ENCODE measurements at regions of chr12 and their contacts with region 1.

Region 1: DNA sequence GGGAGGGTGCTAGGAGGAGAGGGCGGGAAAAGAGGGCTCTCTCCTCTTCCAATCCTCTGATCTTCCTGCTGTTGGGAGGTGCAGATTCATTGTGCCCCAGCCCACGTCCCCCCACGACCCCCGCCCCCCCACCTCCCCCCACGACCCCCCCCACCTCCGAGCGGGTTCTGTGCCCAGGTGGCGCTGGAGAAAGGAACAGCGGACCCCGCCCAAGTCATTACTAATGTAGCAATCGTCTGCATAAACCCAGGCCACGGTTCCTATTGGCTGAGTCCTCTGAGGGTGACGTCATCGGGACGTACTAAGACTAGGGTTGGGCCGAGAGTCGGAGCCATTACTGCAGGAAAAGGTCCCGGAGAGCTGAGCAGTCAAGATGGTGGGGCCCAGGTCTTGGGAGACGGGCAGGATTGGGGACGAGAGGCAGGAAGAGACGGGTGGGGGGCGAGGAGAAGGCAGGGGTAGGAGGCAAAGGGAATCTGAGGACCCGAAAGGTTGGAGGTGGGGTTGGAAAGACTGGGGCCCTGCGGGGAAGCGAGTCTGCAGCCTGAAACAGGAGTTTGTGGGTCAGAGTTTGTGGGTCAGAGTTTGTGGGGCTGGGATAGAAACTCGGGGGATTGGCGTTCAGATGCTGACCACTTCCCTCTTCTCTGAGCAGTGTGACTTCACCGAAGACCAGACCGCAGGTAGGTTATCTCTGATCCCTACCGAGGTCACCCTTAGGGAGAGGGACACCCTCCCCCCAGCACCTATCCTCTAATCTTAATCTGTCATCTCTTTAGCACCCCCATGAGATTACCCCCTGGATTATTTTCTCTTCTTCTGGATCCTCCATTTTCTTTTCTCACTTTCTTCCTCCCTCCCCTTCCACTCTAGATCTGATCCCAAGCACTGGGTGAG is at the start of gene MYL6:
- DNase-seq: peak; percentile 90
- H3K4me3 ChIP-seq: peak within 1 kb of the TSS; percentile 82 to 87
- H3K27ac ChIP-seq: peak within 1 kb of the TSS; percentile 82 to 89
- H3K4me1 ChIP-seq: peaks cover 30 to 39% of the 10 kb centered on the region in 2 experiments; a peak in 3 of 4 replicates
- H3K27me3 ChIP-seq: no peaks in the 10 kb centered on the region
- CTCF ChIP-seq: no peak
- EP300 ChIP-seq: no peak
- RAD21 ChIP-seq: no peak
- polyA plus RNA-seq, gene MYL6: 4,697 and 4,711 TPM in 2 replicates

Region 2: GRCh38 chr12:56178347-56178746 is 20.1 kb after region 1 on chr12:
- CTCF ChIA-PET with region 1: no interaction called
- POLR2A ChIA-PET with region 1: interaction called, 12 read pairs
- DNase-seq: no peak
- H3K4me3 ChIP-seq: no peak overlapping the region
- H3K27ac ChIP-seq: no peak overlapping the region
- H3K4me1 ChIP-seq: no peaks in the 10 kb centered on the region
- H3K27me3 ChIP-seq: no peaks in the 10 kb centered on the region
- CTCF ChIP-seq: no peak
- EP300 ChIP-seq: no peak
- RAD21 ChIP-seq: no peak

Measured in SK-N-SH (cell line).